Testis (tissue), 5 donors: ENCODE measurements at regions of chr12 and their contacts with region 1.

Region 1: GRCh38 chr12:64544371-64545080 is 65.8 kb upstream of the RASSF3 start:
- DNase-seq: no peak
- H3K4me3 ChIP-seq: peak overlapping the region; percentile 17 to 29
- H3K27ac ChIP-seq: no peak overlapping the region
- H3K4me1 ChIP-seq: no peaks in the 10 kb centered on the region
- H3K27me3 ChIP-seq: no peaks in the 10 kb centered on the region
- CTCF ChIP-seq: no peak
- POLR2A ChIP-seq: no peak

Region 2: GRCh38 chr12:64691795-64692583 is 147.5 kb after region 1 on chr12:
- intact Hi-C with region 1: loop called (anchors 5 kb)
- DNase-seq: no peak
- H3K4me3 ChIP-seq: no peak overlapping the region
- H3K27ac ChIP-seq: no peak overlapping the region
- H3K4me1 ChIP-seq: no peaks in the 10 kb centered on the region
- H3K27me3 ChIP-seq: no peaks in the 10 kb centered on the region
- CTCF ChIP-seq: no peak
- POLR2A ChIP-seq: no peak